Uterus (tissue), 4 donors: ENCODE measurements at regions of chr5 and their contacts with region 1.

Region 1: DNA sequence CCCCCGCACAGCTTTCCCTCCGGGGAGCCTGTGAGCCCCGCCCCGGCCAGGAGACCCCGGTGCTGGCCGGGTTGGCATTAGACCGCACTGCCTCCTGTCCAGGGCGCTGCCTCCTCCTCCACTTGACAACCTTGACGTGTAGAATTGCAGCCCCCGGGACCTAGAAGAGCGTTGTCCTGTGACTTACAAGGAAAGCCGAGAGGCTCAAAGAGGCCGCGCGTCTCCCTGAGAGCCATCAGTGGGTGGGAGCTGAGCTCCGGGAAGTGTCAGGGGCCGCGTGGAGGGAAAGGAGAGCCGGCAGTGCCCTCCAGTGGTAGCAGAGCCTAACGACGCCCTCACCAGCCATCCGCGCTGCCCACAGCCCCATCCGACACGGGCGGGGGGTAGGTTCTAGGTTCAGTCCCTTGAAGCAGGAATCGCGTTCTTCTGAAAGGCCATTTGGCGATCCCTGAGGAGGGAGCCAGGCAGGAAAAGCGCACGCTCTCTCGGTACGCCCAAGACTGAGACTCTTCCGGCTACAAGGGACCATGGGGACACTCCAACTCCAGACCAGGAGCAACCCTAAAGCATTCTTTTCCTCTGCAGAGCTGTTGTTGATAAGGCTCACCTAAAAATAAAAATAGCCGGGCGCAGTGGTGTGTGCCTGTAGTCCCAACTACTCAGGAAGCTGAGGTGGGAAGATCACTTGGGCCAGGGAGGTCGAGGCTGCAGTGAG is 40.6 kb upstream of the SAP30L start:
- DNase-seq: peak; percentile 70 to 78
- H3K4me3 ChIP-seq: peak overlapping the region; percentile 4 to 13
- H3K27ac ChIP-seq: no peak overlapping the region
- H3K4me1 ChIP-seq: peaks cover 0 to 3% of the 10 kb centered on the region in 2 donors
- H3K27me3 ChIP-seq: no peaks in the 10 kb centered on the region
- CTCF ChIP-seq: peak; percentile 67 to 89 (median 86)
- POLR2A ChIP-seq: no peak

Region 2: DNA sequence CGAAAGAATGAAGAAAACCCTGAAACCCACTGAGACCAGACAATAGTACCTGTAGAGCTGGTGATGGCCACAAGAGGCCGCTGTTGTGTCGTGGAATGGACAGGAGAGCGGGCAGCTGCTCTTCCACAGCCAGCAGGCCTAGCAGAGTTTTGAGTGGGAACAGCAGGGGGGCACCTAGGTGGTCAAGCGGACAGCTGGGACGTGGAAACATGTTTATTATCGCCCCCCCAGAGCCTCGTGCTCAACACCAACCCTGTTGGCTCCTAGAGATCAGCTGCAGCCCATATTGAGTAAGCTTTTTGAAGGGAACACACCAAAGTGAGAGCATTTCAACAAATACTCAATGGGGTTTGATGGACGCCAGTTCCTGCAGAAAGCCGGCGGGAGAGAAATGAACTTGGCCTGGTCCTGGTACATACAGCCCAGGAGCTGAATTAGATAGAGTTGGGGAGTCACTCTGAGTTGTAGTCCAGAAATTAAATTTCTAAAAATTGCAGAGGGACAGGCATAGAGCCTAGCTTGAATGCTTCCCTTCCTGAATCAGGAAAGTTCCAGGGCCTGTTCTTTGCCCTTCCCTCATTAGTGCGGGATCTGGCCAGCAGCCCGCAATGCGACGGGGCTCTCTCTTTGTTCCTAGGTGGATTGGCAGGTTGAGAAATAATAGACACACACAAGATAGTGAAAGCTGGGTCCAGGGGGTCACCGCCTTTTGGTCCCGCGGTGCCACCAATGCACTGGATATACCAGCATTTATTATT is 332.6 kb before region 1 on chr5:
- intact Hi-C with region 1: loop called (anchors 10 kb)
- DNase-seq: peak; percentile 77 to 81
- H3K4me3 ChIP-seq: no peak overlapping the region
- H3K27ac ChIP-seq: no peak overlapping the region
- H3K4me1 ChIP-seq: no peaks in the 10 kb centered on the region
- H3K27me3 ChIP-seq: no peaks in the 10 kb centered on the region
- CTCF ChIP-seq: peak; percentile 90 to 92 (median 92)
- POLR2A ChIP-seq: no peak

Region 3: DNA sequence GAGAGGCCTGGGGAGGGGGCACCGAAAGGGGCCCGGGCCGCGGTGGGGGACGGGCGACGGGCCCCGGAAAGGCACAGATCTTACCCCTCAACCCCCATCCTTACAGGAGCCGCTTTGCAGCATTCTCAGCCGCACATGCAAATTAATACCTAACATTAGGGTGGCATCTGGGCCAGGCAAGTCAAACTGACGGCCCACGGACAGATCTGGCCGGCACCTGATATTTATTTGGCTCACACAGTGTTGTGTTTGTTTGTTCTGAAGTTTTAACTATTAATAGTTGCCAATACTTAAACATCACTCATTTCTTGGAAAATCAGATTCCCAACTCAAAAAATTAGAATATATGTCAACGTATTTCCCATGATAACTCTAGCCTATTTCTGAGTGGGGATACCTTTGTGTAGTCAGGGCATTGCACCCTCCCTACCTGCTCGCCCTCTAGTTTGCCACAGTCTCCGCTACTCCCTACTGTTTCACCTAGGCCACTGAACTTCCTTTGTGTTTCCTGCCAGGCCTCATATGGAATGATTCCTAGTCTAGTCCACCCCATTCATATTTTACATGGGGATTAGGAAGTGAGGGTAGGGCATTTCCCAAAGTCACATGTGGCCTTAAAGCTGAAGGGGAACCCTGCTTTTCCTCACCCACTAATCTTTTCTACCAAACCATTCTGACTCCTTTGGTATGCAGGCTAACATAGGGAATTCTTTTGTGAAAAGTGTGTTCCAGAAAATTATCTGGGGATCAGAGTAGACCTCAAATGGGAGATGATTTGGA is 278.1 kb after region 1 on chr5:
- intact Hi-C with region 1: no loop called
- DNase-seq: no peak
- H3K4me3 ChIP-seq: peak overlapping the region; percentile 31 to 48
- H3K27ac ChIP-seq: peak overlapping the region; percentile 79 to 82
- H3K4me1 ChIP-seq: peaks cover 0 to 5% of the 10 kb centered on the region in 2 donors
- H3K27me3 ChIP-seq: no peaks in the 10 kb centered on the region
- CTCF ChIP-seq: no peak
- POLR2A ChIP-seq: no peak

Region 4: GRCh38 chr5:155489949-155490348 is 1084.7 kb after region 1 on chr5:
- intact Hi-C with region 1: no loop called
- DNase-seq: no peak
- H3K4me3 ChIP-seq: no peak overlapping the region
- H3K27ac ChIP-seq: no peak overlapping the region
- H3K4me1 ChIP-seq: no peaks in the 10 kb centered on the region
- H3K27me3 ChIP-seq: no peaks in the 10 kb centered on the region
- CTCF ChIP-seq: no peak
- POLR2A ChIP-seq: no peak